Heart right ventricle (tissue), 16 donors: ENCODE measurements at regions of chr3 and their contacts with region 1.

Region 1: GRCh38 chr3:39383045-39383880 is at the start of gene SLC25A38:
- DNase-seq: peak; percentile 67 to 78
- ATAC-seq: peak; percentile 74 to 85 (median 80)
- H3K4me3 ChIP-seq: peak within 1 kb of the TSS; percentile 61 to 93 (median 80)
- H3K27ac ChIP-seq: peak within 1 kb of the TSS; percentile 36 to 96 (median 89)
- H3K4me1 ChIP-seq: peaks cover 10 to 40% (median 23%) of the 10 kb centered on the region in 9 donors
- H3K27me3 ChIP-seq: no peaks in the 10 kb centered on the region
- CTCF ChIP-seq: peak in 5 of 9 donors; percentile 21 to 51 (median 35)
- total RNA-seq, gene SLC25A38: 9.7 to 25.8 (median 19.2) TPM

Region 2: GRCh38 chr3:39107388-39108199 is 275.7 kb before region 1 on chr3 and contains the starts of genes GORASP1 and TTC21A:
- intact Hi-C with region 1: loop called in 1 of 10 experiments (anchors 10 kb)
- DNase-seq: peak; percentile 87 to 92
- ATAC-seq: peak; percentile 89 to 95 (median 92)
- H3K4me3 ChIP-seq: peak within 1 kb of the TSS; percentile 71 to 100 (median 94)
- H3K27ac ChIP-seq: peak within 1 kb of the TSS; percentile 90 to 99 (median 96)
- H3K4me1 ChIP-seq: peaks cover 24 to 54% (median 44%) of the 10 kb centered on the region in 9 donors
- H3K27me3 ChIP-seq: no peaks in the 10 kb centered on the region
- CTCF ChIP-seq: peak in 3 of 9 donors; percentile 4 to 24 (median 5)
- total RNA-seq, gene GORASP1: 35.8 to 54.2 (median 41.1) TPM
- total RNA-seq, gene TTC21A: 1.1 to 3.1 (median 1.5) TPM

Region 3: DNA sequence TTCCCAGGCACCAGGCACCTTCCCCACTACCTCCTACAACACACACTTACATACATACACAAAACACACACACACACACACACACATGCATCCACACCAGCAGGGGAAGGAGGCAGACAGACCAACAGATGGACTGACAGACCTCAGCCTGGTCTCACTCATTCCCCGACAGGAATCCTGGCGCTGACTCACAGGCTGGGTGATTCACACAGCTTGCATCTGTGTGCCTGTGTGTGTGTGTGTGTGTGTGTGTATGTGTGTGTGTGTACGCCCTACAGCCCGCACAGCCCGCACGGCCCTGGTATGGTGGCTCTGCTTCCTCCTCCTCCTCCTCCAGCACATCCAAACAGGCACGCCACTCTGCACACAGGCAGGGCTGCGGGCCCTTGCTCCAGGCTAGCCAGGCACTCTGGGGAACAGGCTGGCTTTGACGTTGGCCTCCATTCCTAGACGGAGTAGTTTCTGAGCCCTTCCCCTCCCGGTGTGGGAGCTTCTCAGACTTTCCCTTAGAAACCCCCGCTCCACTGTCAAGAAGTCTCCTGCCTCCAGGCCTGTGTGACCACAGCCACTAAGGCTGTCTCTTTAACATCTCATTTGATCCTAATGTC is 236.2 kb before region 1 on chr3:
- intact Hi-C with region 1: loop called in 1 of 10 experiments (anchors 10 kb)
- DNase-seq: peak; percentile 62 to 72
- ATAC-seq: peak; percentile 34 to 71 (median 56)
- H3K4me3 ChIP-seq: peak overlapping the region in 7 of 10 donors; percentile 13 to 34 (median 19)
- H3K27ac ChIP-seq: peak overlapping the region; percentile 24 to 100 (median 75)
- H3K4me1 ChIP-seq: peaks cover 50 to 94% (median 76%) of the 10 kb centered on the region in 9 donors
- H3K27me3 ChIP-seq: no peaks in the 10 kb centered on the region
- CTCF ChIP-seq: no peak

Region 4: GRCh38 chr3:39406368-39407258 is 23.4 kb after region 1 on chr3 and contains the start of gene RPSA:
- intact Hi-C with region 1: loop called in 1 of 10 experiments (anchors 1 kb)
- DNase-seq: peak; percentile 90 to 93
- ATAC-seq: peak; percentile 95 to 99 (median 98)
- H3K4me3 ChIP-seq: peak within 1 kb of the TSS; percentile 64 to 87 (median 72)
- H3K27ac ChIP-seq: peak within 1 kb of the TSS; percentile 14 to 90 (median 82)
- H3K4me1 ChIP-seq: peaks cover 2 to 45% (median 22%) of the 10 kb centered on the region in 9 donors
- H3K27me3 ChIP-seq: no peaks in the 10 kb centered on the region
- CTCF ChIP-seq: peak in 8 of 9 donors; percentile 8 to 57 (median 34)
- total RNA-seq, gene RPSA: 350 to 651 (median 384) TPM

Region 5: DNA sequence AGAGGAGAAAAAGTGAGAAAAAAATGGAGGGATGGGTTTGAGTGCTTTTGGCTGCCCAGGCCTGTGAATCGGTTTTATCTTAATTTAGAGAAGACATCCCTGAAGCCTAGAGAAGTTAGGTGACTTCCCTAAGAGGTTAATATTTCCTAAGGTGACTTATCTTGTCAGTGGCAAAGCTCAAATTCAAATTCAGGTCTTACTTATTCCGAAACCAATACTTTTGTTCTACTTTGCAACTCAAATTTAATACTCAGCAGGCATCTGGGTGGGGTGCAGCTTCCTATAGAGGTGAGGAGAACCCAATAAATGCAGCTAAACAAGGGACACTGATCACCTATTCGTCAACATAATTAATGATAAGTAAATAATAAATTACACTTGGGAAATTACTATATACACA is 371.3 kb after region 1 on chr3:
- intact Hi-C with region 1: no loop called
- DNase-seq: no peak
- ATAC-seq: no peak
- H3K4me3 ChIP-seq: no peak overlapping the region
- H3K27ac ChIP-seq: no peak overlapping the region
- H3K4me1 ChIP-seq: peaks cover 0 to 25% (median 5%) of the 10 kb centered on the region in 9 donors
- H3K27me3 ChIP-seq: no peaks in the 10 kb centered on the region
- CTCF ChIP-seq: no peak